Motor neuron (in vitro differentiated cells): ENCODE measurements at regions of chr7 and their contacts with region 1.

Region 1: GRCh38 chr7:4797858-4798705 is 22.7 kb downstream of the AP5Z1 start:
- ATAC-seq: peak; percentile 11 to 79 (median 56)
- H3K4me3 ChIP-seq: no peak overlapping the region
- H3K27ac ChIP-seq: no peak overlapping the region
- H3K4me1 ChIP-seq: peaks cover 9% of the 10 kb centered on the region in 2 donors

Region 2: GRCh38 chr7:4343272-4344247 is 454.5 kb before region 1 on chr7:
- in situ Hi-C with region 1: no loop called
- ATAC-seq: peak in 1 of 8 experiments; percentile 56
- H3K4me3 ChIP-seq: no peak overlapping the region
- H3K27ac ChIP-seq: no peak overlapping the region
- H3K4me1 ChIP-seq: no peaks in the 10 kb centered on the region

Region 3: DNA sequence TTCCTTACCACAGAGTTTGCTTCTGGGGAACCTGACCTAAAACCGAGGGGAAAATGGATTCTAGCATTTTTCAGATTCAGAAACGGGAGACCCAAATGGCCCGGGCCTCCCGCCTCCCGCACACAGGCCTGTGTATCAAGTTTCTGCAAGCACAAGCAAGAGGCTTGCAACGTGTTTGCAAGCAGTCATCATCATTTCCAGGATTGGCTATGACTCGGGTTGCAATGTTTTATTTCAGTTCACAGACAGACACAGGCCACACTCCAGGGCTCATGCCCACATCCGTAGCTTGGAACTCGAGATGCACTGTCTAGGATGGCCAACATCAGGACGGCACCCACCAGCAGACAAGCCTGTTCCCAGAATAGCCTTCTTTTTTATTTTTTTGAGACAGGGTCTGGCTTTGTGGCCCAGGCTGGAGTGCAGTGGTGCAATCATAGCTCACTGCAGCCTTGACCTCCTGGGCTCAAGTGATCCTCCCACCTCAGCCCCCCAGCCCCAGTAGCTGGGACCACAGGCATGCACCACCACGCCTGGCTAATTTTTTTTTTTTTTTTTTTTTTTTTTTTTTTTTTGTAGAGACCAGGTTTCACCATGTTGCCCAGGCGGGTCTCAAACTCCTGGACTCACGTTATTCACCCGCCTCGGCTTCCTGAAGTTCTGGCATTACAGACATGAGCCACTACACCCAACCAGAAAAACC is 184.1 kb before region 1 on chr7:
- in situ Hi-C with region 1: no loop called
- ATAC-seq: peak in 6 of 8 experiments; percentile 21 to 89 (median 58)
- H3K4me3 ChIP-seq: no peak overlapping the region
- H3K27ac ChIP-seq: no peak overlapping the region
- H3K4me1 ChIP-seq: peaks cover 10 to 11% of the 10 kb centered on the region in 2 donors

Region 4: GRCh38 chr7:4700577-4701235 is 97.4 kb before region 1 on chr7:
- in situ Hi-C with region 1: no loop called
- ATAC-seq: peak in 7 of 8 experiments; percentile 53 to 91 (median 78)
- H3K4me3 ChIP-seq: no peak overlapping the region
- H3K27ac ChIP-seq: no peak overlapping the region
- H3K4me1 ChIP-seq: peaks cover 7 to 16% of the 10 kb centered on the region in 2 donors

Region 5: GRCh38 chr7:5083311-5083711 is 285.2 kb after region 1 on chr7:
- in situ Hi-C with region 1: loop called in 3 of 9 experiments (anchors 10 to 25 kb)
- ATAC-seq: no peak
- H3K4me3 ChIP-seq: no peak overlapping the region
- H3K27ac ChIP-seq: no peak overlapping the region
- H3K4me1 ChIP-seq: no peaks in the 10 kb centered on the region